ENCODE measurements at regions of chr1 and their contacts with region 1.

Region 1: GRCh38 chr1:224644553-224645154 is 28.5 kb downstream of the CNIH3 start:
- DNase-seq: peak; percentile 16 to 65 (median 53)
- ATAC-seq: peak; percentile 78
- H3K4me3 ChIP-seq: no peak overlapping the region
- H3K4me3 Mint-ChIP-seq: no peak overlapping the region
- H3K27ac ChIP-seq: no peak overlapping the region
- H3K27ac Mint-ChIP-seq: no peak overlapping the region
- H3K4me1 ChIP-seq: no peaks in the 10 kb centered on the region
- H3K4me1 Mint-ChIP-seq: peaks cover 0 to 8% (median 0%) of the 10 kb centered on the region in 7 donors
- H3K27me3 ChIP-seq: no peaks in the 10 kb centered on the region
- H3K27me3 Mint-ChIP-seq: peaks cover 0 to 14% (median 6%) of the 10 kb centered on the region in 5 donors

Region 2: DNA sequence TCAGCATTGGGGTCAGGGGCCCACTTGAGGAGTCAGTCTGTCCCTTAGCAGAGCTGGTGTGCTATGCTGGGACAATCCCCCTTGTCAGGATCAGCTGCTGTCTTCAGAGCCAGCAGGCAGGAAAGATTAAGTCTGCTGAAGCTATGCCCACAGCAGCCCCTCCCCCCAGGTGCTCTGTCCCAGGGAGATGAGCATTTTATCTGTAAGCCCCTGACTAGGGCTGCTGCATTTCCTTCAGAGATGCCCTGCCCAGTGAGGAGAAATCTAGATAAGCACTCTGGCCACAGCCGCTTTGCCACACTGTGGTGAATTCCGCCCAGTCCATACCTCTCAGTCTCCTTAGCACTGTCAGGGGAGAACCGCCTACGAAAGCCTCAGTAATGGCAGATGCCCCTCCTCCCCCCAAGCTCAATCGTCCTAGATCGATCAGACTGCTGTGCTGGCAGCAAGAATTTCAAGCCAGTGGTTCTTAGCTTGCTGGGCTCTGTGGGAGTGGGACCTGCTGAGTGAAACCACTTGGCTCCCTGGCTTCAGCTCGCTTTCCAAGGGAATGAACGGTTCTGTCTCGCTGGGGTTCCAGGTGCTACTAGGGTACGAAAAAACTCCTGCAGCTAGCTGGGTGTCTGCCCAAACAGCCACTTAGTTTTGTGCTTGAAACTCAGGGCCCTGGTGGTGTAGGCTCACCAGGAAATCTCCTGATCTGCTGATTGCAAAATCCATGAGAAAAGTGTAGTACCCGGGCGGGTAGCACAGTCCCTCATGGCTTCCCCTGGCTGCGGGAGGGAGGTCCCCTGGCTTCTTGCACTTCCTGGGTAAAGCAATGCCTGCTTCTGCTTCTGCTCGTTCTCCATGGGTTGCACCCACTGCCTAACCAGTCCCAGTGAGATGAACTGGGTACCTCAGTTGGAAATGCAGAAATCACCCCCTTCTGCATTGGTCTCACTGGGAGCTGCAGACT is 773.8 kb before region 1 on chr1:
- CTCF ChIA-PET with region 1: no interaction called
- POLR2A ChIA-PET with region 1: no interaction called
- intact Hi-C with region 1: no loop called
- DNase-seq: no peak
- ATAC-seq: peak; percentile 64
- H3K4me3 ChIP-seq: no peak overlapping the region
- H3K4me3 Mint-ChIP-seq: peak overlapping the region in 5 of 10 donors; percentile 20 to 66 (median 41)
- H3K27ac ChIP-seq: no peak overlapping the region
- H3K27ac Mint-ChIP-seq: peak overlapping the region in 1 of 9 donors; percentile 5
- H3K4me1 ChIP-seq: no peaks in the 10 kb centered on the region
- H3K4me1 Mint-ChIP-seq: no peaks in the 10 kb centered on the region
- H3K27me3 ChIP-seq: no peaks in the 10 kb centered on the region
- H3K27me3 Mint-ChIP-seq: peaks cover 13 to 46% (median 19%) of the 10 kb centered on the region in 5 donors

Region 3: DNA sequence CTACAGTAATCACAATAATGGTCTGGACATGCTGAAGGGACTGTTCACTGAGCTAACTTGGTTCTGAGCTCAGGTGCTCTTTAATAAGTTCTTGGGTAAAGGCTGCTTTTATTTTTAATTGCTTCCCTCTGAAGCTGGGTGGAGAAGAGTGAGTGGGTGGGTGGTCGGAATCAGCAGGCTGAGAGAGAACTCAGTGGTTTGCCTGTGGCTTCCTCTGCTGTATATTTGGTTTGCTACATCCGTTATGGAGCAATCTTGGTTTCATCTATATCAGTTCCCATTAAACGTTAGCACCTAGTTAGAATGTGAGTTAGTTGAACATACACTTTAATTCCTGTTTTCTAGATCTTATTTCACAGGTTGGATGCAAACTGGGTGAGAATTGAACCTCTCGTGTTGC is 264.7 kb before region 1 on chr1:
- CTCF ChIA-PET with region 1: no interaction called
- POLR2A ChIA-PET with region 1: no interaction called
- intact Hi-C with region 1: no loop called
- DNase-seq: peak in 8 of 9 donors; percentile 25 to 60 (median 42)
- ATAC-seq: peak; percentile 89
- H3K4me3 ChIP-seq: peak overlapping the region; percentile 6
- H3K4me3 Mint-ChIP-seq: peak overlapping the region; percentile 76 to 91 (median 80)
- H3K27ac ChIP-seq: peak overlapping the region; percentile 54
- H3K27ac Mint-ChIP-seq: peak overlapping the region; percentile 58 to 90 (median 84)
- H3K4me1 ChIP-seq: peaks cover 75 to 76% of the 10 kb centered on the region in 2 donors
- H3K4me1 Mint-ChIP-seq: peaks cover 67 to 93% (median 85%) of the 10 kb centered on the region in 7 donors
- H3K27me3 ChIP-seq: no peaks in the 10 kb centered on the region
- H3K27me3 Mint-ChIP-seq: no peaks in the 10 kb centered on the region

Region 4: DNA sequence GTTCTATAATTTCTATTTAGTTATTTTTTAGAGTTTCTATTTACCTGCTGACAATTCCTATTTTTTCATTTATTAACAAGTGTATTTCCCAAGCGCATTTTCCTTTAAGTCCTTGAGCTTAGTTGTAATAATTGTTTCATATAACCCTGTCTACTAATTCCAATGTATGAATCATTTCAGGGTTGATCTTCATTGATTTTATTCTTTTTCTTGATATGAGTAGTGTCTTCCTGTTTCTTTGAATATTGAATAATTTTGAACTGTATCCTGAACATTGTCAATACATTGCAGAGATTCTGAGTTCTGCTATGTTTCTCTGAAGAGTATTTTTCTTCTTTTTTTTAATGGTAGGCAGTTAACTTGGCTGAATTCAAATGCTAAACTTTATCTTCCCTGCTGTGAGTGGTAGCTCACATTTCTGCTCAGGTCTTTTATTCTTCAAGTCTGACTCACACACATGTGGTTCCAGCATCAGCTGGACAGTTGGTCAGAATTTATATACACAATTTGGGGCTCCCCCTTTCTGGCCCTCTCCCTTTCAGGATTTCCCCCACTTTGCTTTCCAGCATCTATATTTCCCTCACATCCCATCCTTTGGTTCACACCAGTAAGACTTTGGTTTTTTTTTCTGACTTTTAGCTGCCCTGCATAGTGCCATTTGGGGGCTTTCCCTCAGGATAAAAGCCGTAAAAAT is 155.7 kb before region 1 on chr1:
- CTCF ChIA-PET with region 1: no interaction called
- POLR2A ChIA-PET with region 1: no interaction called
- intact Hi-C with region 1: no loop called
- DNase-seq: no peak
- ATAC-seq: no peak
- H3K4me3 ChIP-seq: no peak overlapping the region
- H3K4me3 Mint-ChIP-seq: no peak overlapping the region
- H3K27ac ChIP-seq: no peak overlapping the region
- H3K27ac Mint-ChIP-seq: no peak overlapping the region
- H3K4me1 ChIP-seq: no peaks in the 10 kb centered on the region
- H3K4me1 Mint-ChIP-seq: peaks cover 0 to 16% (median 0%) of the 10 kb centered on the region in 7 donors
- H3K27me3 ChIP-seq: no peaks in the 10 kb centered on the region
- H3K27me3 Mint-ChIP-seq: peaks cover 0 to 8% (median 0%) of the 10 kb centered on the region in 5 donors

Region 5: DNA sequence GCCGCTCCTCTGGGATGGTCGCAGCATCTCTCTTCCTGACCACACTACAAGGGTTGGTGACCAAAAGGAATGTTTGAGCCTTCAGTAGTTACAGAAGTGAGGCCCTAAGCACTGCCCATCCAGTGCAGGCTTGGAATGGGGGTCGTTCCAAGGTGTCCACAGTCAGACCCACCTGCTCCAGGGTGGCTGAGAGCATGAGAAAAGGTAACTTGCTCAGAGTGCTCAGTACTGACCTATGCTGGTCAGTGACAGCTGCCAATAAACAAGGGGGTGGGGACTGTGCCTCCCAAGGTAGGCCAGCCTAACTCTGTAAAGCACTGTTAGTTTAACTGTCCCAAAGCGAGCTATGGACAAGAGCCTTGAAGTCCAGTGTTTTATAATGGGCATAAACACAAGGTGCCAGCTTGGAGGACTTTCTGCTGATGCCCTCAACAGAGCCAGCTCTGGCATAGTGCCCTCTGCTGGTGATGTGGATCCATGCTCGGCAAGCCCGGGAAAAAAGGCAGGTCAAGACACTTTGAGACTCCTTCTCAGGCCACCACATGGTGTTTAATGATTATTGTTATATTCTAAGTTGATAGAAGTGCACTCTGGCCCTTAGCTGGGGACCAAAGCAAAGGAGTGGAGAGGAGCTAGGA is 206.7 kb after region 1 on chr1:
- CTCF ChIA-PET with region 1: no interaction called
- POLR2A ChIA-PET with region 1: no interaction called
- intact Hi-C with region 1: loop called in 1 of 2 experiments (anchors 1 kb)
- DNase-seq: peak in 7 of 9 donors; percentile 3 to 51 (median 17)
- ATAC-seq: peak; percentile 38
- H3K4me3 ChIP-seq: no peak overlapping the region
- H3K4me3 Mint-ChIP-seq: no peak overlapping the region
- H3K27ac ChIP-seq: no peak overlapping the region
- H3K27ac Mint-ChIP-seq: no peak overlapping the region
- H3K4me1 ChIP-seq: no peaks in the 10 kb centered on the region
- H3K4me1 Mint-ChIP-seq: peaks cover 0 to 2% (median 0%) of the 10 kb centered on the region in 7 donors
- H3K27me3 ChIP-seq: no peaks in the 10 kb centered on the region
- H3K27me3 Mint-ChIP-seq: peaks cover 0 to 17% (median 9%) of the 10 kb centered on the region in 5 donors

Region 6: DNA sequence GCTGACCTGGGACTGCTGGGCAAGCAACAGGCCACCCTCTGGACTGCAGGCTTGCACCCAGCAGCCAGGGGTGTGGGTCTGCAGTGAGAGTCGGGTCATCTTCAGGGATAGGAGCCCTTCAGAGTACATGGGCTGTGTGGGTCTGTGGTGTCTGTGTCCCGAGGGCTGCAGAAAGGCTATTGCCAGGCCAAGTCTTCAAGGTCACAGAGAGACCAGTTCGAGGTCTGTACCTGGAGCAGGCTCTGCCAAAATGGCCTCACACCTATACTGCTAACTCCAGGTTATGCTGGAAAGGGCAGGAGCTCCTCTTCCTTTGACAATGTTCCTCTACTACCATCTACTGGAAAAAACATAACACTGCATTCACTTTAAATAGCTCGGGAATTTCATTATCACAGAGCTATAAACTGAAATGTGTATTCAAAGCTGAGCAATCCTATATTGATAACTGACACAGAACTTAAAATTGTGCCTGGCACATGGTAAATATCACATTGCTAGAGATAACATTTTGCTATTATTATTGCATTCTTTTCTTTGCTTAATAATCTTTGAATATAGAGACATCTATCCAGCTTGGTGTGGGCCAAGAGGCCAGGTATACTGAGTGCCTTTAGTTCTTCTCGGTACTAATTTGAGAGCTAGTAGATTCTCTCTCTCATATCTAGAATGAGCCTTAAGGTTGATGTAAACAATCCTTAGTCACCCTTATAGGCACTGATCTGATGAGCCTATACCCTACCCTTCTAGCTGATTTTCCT is 277.9 kb after region 1 on chr1:
- CTCF ChIA-PET with region 1: interaction called, 4 read pairs
- POLR2A ChIA-PET with region 1: no interaction called
- intact Hi-C with region 1: loop called (anchors 1 to 2 kb)
- DNase-seq: peak in 2 of 9 donors; percentile 13 to 25
- ATAC-seq: peak; percentile 52
- H3K4me3 ChIP-seq: no peak overlapping the region
- H3K4me3 Mint-ChIP-seq: no peak overlapping the region
- H3K27ac ChIP-seq: no peak overlapping the region
- H3K27ac Mint-ChIP-seq: no peak overlapping the region
- H3K4me1 ChIP-seq: no peaks in the 10 kb centered on the region
- H3K4me1 Mint-ChIP-seq: peaks cover 0 to 2% (median 0%) of the 10 kb centered on the region in 7 donors
- H3K27me3 ChIP-seq: no peaks in the 10 kb centered on the region
- H3K27me3 Mint-ChIP-seq: peaks cover 4 to 23% (median 17%) of the 10 kb centered on the region in 5 donors